ENCODE measurements at regions of chr4 and their contacts with region 1.

Region 1: GRCh38 chr4:6308899-6309643 is 39.4 kb downstream of the WFS1 start:
- DNase-seq: no peak
- ATAC-seq: peak; percentile 50

Region 2: DNA sequence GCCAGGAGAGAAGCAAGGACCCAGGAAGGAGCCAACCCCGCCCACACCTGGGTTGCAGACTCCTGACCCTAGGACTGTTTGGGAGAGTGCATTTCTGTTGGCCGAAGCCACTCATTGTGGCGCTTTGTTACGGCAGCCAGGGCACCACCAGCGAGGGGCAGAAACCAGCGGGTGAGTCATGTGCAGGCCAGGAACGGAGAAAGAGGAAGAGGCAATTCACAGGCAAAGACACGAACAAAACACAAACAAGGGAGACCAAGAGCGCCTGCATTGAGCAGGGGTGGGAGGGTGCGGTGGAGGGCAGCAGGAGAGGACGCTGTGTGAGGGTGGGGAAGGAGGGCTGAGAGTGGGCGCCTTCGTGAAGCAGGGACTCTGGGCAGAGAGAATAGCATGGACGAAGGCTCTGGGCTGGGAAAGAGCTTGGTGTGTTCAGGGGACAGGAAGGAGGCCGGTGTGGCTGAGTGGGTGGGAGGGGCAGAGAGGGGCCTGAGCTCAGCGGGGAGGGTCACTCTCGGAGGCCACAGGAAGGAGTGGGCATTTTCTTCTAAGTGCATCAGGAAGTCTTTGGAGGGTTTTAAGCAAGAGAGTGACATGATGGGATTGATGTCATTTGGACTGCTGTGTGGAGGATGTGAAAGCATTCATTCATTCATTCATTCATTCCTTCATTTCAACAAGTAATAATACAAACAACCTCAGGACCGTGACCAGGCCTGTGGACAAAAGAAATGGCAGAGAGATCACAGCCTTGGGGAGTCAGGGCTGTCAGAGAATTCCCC is 51.6 kb before region 1 on chr4:
- intact Hi-C with region 1: no loop called
- DNase-seq: no peak
- ATAC-seq: no peak

Region 3: GRCh38 chr4:6269616-6270511 is 39.2 kb before region 1 on chr4 and contains the start of gene WFS1:
- intact Hi-C with region 1: loop called (anchors 5 kb)
- DNase-seq: peak; percentile 98
- ATAC-seq: peak; percentile 99
- total RNA-seq, gene WFS1: 88.4 TPM

Region 4: DNA sequence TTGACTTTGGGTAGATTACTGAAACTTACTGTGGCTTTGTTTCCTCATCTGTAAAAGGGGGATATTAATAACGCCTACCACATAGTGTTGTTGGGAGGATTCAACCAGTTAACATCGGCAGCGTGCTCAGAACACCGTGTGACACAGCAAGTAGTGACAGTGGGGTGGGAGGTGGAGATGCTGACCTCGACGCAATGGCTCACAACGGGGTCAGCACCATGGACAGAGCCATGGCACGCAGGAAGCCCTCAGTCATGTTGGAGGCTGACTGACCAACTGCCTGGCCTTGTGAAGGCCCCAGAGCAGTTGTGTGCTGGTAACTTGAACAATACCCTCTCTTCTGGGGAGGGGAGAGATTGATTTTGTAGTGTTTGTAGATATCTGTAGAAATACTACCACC is 53.8 kb after region 1 on chr4:
- intact Hi-C with region 1: no loop called
- DNase-seq: peak; percentile 33
- ATAC-seq: no peak